ENCODE measurements at regions of chr5 and their contacts with region 1.

Region 1: GRCh38 chr5:140351609-140352334 is 5.4 kb upstream of the HBEGF start:
- DNase-seq: peak in 1 of 2 donors; percentile 88
- ATAC-seq: peak; percentile 82 to 89 (median 87)
- H3K4me3 ChIP-seq: no peak overlapping the region
- H3K4me3 Mint-ChIP-seq: no peak overlapping the region
- H3K27ac ChIP-seq: no peak overlapping the region
- H3K27ac Mint-ChIP-seq: no peak overlapping the region
- H3K4me1 ChIP-seq: peaks cover 15% of the 10 kb centered on the region
- H3K4me1 Mint-ChIP-seq: peaks cover 4 to 11% of the 10 kb centered on the region in 2 donors
- H3K27me3 ChIP-seq: no peaks in the 10 kb centered on the region
- H3K27me3 Mint-ChIP-seq: peaks cover 6 to 13% of the 10 kb centered on the region in 2 donors
- CTCF ChIP-seq: peak; percentile 90

Region 2: DNA sequence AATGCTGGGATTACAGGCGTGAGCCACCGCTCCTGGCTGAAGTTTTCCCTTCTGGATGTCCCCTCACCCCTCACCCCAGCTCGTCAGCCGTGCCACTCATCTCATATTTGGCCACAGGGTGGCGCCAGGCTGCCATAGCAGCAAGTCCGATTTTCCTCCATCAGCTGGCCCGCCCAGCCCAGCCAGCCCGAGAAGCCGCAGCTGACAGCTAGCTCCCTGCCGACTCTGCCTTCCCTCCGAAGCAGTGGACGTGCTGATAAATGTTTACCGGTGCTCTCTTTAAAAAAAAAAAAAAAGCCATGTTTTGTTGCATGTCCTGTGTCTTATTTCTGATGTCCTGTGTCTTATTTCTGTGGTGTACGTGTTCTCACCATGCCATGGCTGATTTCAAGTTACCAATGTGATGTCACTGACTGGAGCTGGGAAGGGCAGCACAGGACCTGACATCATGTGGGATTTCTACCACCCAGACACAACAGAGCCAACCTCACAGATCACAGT is 107.2 kb before region 1 on chr5:
- intact Hi-C with region 1: loop called (anchors 1 kb)
- DNase-seq: peak; percentile 61 to 83
- ATAC-seq: peak; percentile 78 to 88 (median 86)
- H3K4me3 ChIP-seq: no peak overlapping the region
- H3K4me3 Mint-ChIP-seq: no peak overlapping the region
- H3K27ac ChIP-seq: no peak overlapping the region
- H3K27ac Mint-ChIP-seq: peak overlapping the region in 1 of 2 donors; percentile 58
- H3K4me1 ChIP-seq: no peaks in the 10 kb centered on the region
- H3K4me1 Mint-ChIP-seq: peaks cover 10 to 15% of the 10 kb centered on the region in 2 donors
- H3K27me3 ChIP-seq: no peaks in the 10 kb centered on the region
- H3K27me3 Mint-ChIP-seq: no peaks in the 10 kb centered on the region
- CTCF ChIP-seq: peak; percentile 75